ENCODE measurements at regions of chr7 and their contacts with region 1.

Region 1: GRCh38 chr7:106659963-106660861 is 746 bp downstream of the CCDC71L start:
- DNase-seq: peak; percentile 54 to 86
- H3K4me3 ChIP-seq: peak overlapping the region; percentile 81
- H3K27ac ChIP-seq: peak overlapping the region; percentile 71
- H3K4me1 ChIP-seq: peaks cover 19% of the 10 kb centered on the region
- H3K27me3 ChIP-seq: no peaks in the 10 kb centered on the region
- CTCF ChIP-seq: peak; percentile 77

Region 2: DNA sequence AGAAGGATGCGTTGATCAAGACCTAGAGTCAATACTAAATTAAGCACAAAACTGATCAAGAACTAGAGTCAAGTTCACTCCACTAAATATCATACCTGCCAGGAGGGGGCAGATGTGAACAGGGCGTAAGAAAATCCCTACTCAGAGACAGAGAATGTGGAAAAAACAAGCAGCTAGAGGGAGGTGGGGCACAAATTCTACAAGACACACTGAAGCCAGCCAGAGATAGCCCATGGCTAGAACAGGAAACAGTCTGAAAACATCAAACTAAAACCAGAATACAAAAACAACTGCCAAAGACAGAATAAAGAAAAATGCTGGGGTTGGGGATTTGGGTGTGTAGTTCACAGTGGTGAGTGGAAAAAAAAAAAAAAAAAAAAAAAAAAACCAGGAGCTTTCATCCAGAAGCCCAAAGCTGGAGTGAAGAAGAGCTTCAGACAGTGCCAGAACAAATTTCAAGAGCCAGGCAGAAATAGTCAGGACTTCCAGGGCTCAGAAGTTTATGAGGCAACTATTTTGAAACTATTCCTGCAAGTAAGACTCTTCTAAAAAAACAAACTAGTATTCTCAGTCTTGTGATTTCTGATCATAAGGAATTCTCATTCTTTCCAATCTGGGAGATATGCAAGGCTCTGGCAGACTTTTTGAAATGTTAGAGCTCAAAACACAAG is 117.5 kb before region 1 on chr7:
- CTCF ChIA-PET with region 1: interaction called, 23 read pairs
- POLR2A ChIA-PET with region 1: interaction called, 8 read pairs
- intact Hi-C with region 1: loop called (anchors 1 kb)
- DNase-seq: peak; percentile 61 to 70
- H3K4me3 ChIP-seq: no peak overlapping the region
- H3K27ac ChIP-seq: no peak overlapping the region
- H3K4me1 ChIP-seq: peaks cover 8% of the 10 kb centered on the region; the same call in 1 of the 2 replicates
- H3K27me3 ChIP-seq: no peaks in the 10 kb centered on the region
- CTCF ChIP-seq: peak; percentile 82

Region 3: DNA sequence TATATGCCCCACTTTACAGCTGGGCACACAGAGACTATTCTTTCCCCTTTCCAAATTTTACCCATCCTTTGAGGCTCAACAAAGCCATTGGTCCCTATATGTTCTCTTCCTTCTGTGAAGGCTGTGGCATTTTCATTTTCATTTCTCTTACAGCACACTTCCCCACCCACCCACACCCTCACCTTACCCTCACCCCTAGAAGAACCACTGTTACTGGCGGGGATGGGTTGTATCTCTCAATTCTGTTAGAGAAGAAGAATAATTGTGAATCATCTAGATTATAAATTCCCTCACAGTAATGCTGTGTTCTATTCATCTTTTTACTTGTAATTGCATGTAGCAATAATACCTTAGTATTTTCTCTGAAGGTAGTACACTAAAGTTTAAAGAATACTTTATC is 10.9 kb after region 1 on chr7:
- CTCF ChIA-PET with region 1: interaction called, 12 read pairs
- POLR2A ChIA-PET with region 1: no interaction called
- intact Hi-C with region 1: no loop called
- DNase-seq: no peak
- H3K4me3 ChIP-seq: no peak overlapping the region
- H3K27ac ChIP-seq: no peak overlapping the region
- H3K4me1 ChIP-seq: no peaks in the 10 kb centered on the region
- H3K27me3 ChIP-seq: no peaks in the 10 kb centered on the region
- CTCF ChIP-seq: no peak

Region 4: DNA sequence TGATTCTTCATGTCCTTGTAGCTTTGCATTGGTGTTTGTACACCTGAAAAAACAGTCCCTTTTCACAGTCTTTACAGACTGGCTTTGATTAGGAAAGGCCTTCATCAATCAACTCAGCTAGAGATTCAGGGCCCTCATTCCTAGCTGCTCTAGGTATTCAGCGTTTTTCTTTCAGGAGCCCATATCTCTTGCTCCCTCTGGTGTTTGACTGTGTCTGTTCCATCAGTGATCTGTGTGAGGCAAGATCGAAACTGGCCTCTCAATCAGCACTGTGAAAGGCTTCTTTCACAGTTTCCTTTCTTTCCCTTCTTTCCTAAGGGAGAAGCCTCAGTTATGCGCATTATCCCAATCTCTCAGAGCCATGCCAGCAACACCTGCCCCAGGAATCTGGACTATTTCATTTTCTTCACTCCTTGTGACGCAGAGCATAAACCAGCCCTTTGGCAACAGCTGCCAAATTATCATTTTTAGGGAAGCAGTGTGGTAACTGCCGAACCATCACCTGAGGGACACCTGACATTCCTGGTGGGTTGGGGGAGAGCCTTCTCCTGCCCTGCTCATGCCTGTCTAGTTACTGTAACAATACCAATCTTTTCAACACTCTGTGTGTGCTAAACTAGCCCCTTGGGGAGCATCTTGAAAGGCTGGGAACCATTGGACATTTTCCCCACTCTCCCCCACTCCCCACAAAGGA is 76.4 kb after region 1 on chr7:
- CTCF ChIA-PET with region 1: interaction called, 13 read pairs
- POLR2A ChIA-PET with region 1: interaction called, 7 read pairs
- intact Hi-C with region 1: loop called (anchors 1 kb)
- DNase-seq: peak; percentile 33 to 58
- H3K4me3 ChIP-seq: no peak overlapping the region
- H3K27ac ChIP-seq: peak overlapping the region; percentile 2
- H3K4me1 ChIP-seq: no peaks in the 10 kb centered on the region
- H3K27me3 ChIP-seq: no peaks in the 10 kb centered on the region
- CTCF ChIP-seq: peak; percentile 66

Region 5: DNA sequence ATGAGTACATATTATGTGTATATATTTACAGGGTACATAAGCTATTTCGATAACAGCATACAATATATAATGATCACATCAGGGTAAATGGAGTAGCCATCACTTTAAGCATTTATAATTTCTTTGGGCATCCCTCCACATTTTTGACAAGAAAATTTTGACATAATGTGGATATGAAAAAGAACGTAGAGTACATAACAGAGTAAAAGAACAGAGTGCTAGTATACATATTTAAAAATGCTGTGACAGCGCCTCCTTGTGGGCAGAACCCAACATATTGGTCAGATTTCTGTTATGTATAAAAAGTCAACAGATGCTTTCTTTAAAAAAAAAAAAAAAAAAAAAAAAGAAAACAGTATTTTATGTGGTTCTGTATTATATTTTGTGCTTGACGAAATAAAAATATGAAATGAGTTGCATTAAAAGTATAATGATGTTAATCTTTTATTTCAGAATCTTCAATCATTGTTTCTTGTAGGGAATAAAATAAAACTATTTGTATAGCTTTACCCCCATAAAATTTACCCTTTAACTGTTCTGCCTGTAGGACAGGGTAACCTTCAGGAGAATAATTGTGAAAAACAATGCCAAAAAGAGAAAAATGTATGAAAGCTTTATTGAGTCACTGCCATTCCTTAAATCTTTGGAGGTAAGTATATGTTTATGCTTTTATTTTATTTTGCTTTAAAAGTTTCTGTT is 490.3 kb after region 1 on chr7:
- CTCF ChIA-PET with region 1: no interaction called
- POLR2A ChIA-PET with region 1: no interaction called
- intact Hi-C with region 1: loop called (anchors 1 kb)
- DNase-seq: peak; percentile 45 to 70
- H3K4me3 ChIP-seq: no peak overlapping the region
- H3K27ac ChIP-seq: no peak overlapping the region
- H3K4me1 ChIP-seq: peaks cover 12% of the 10 kb centered on the region; the same call in 1 of the 2 replicates
- H3K27me3 ChIP-seq: no peaks in the 10 kb centered on the region
- CTCF ChIP-seq: peak; percentile 87

Measured in PC-9 (cell line).